ENCODE measurements at regions of chr14 and their contacts with region 1.

Region 1: DNA sequence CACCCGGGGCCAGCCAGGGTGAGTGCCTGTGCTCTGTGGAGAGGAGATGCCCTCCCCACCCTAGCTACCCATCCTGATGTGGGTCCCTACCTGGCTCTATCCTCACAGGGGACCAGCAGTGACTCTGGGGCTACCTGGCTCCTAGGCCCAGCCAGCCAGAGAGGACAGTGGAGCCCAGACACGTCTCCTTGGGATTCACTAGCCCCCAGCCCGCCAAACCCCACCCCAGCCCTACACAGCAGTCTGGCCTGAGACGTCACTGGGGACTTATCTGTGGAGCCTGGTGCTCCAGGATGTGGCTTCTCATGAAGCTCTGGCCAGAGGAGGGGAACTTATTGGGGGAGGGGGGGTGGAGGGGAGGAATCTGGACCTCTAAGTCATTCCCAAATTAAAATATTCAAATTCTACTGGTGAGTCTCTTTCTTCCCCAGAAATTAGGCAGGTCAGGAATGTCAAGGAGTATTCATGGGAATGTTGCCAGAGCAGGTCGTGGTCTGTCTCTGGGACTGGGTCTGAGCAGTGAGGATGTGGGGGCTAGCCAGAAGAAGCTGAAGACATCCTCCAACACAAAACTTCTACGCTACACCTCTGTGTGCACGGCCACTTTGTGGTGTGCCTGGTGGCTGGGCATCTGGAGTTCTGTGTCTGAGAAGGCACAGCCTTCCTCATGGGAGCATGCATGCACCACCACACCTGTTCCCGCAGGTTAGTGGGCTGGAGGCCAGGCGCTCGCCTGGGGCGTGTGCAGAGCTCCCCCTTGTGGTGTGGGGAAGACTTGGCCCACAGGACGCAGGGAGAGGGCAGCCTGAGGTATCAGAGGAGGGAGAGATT is 2.7 kb downstream of the CMTM5 start:
- DNase-seq: peak; percentile 80

Region 2: GRCh38 chr14:23259426-23259825 is 120.2 kb before region 1 on chr14:
- CTCF ChIA-PET with region 1: interaction called, 15 read pairs
- POLR2A ChIA-PET with region 1: no interaction called
- DNase-seq: no peak

Region 3: GRCh38 chr14:23327947-23328744 is 51.4 kb before region 1 on chr14:
- CTCF ChIA-PET with region 1: interaction called, 24 read pairs
- POLR2A ChIA-PET with region 1: interaction called, 10 read pairs
- DNase-seq: peak; percentile 69

Region 4: DNA sequence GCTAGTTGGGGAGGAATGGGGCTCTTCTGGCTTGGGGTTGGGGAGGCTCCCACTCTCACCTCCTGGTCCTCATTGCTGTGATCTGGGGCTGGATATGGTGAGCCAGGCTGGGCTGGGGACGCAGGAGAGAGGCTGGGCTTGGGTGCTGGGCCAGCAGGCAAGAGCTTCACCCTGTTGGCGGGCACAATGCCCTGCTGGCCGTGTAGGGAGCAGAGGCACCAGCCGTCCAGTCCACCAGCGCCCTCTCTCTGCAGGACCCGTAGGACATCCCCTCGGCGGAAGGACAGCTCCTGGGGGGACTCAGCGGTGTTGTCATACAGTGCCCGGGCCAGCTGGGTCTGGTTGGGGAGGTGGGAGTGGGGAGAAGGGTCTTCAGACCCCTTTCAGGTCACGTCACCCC is 19.1 kb before region 1 on chr14:
- CTCF ChIA-PET with region 1: interaction called, 11 read pairs
- POLR2A ChIA-PET with region 1: no interaction called
- DNase-seq: no peak

Region 5: GRCh38 chr14:23366426-23366921 is 13.1 kb before region 1 on chr14:
- CTCF ChIA-PET with region 1: interaction called, 18 read pairs
- POLR2A ChIA-PET with region 1: no interaction called
- DNase-seq: no peak

Region 6: GRCh38 chr14:23392613-23393012 is 13.0 kb after region 1 on chr14:
- CTCF ChIA-PET with region 1: interaction called, 20 read pairs
- POLR2A ChIA-PET with region 1: no interaction called
- DNase-seq: no peak